Endothelial cell of umbilical vein (primary cell): ENCODE measurements at regions of chr16 and their contacts with region 1.

Region 1: GRCh38 chr16:87765776-87766484 is at the start of gene KLHDC4:
- DNase-seq: peak; percentile 86
- H3K4me3 ChIP-seq: peak within 1 kb of the TSS; percentile 55 to 82 (median 78)
- H3K27ac ChIP-seq: peak within 1 kb of the TSS; percentile 92
- H3K4me1 ChIP-seq: peaks cover 8% of the 10 kb centered on the region
- H3K27me3 ChIP-seq: no peaks in the 10 kb centered on the region
- CTCF ChIP-seq: no peak
- POLR2A ChIP-seq: peak; percentile 87
- total RNA-seq, gene KLHDC4: 46.2 and 46.7 TPM in 2 replicates

Region 2: DNA sequence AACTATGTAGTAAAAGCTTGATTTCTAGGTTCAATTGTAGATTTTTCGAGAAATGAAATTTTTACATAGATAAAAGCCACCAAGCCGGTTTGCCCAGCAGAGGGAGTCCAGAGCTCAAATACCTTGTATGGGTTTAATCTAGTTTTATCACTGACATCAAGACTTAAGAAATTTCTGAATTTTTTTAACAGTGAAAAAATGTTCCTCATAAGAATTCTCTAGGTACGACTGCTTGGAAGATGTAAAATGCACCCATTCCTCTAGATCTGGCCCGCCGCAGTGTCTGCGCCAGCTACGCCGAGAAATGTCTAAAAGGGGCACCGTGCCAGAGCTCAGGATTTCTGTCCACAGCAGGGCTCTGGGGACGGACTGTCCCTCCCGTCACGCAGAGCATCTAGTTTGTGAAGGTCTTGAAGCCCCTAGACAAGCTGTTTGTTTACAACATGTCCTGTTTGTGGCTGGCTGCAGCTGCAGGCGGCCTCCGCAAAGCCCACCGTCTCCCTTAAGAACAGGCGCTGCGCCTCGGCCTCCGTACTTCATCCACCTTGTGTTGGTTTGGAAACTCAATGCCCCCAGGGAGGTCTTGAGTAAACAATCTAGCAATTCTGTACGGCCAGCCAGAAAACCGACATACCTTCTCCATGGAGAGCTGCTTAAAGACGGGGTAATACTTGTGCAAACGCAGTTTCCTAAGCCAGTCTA is 349.0 kb before region 1 on chr16:
- CTCF ChIA-PET with region 1: interaction called, 14 read pairs
- POLR2A ChIA-PET with region 1: no interaction called
- dilution Hi-C with region 1: no loop called
- intact Hi-C with region 1: no loop called
- DNase-seq: peak; percentile 61
- H3K4me3 ChIP-seq: no peak overlapping the region
- H3K27ac ChIP-seq: no peak overlapping the region
- H3K4me1 ChIP-seq: no peaks in the 10 kb centered on the region
- H3K27me3 ChIP-seq: no peaks in the 10 kb centered on the region
- CTCF ChIP-seq: peak; percentile 58 to 59
- POLR2A ChIP-seq: no peak

Region 3: GRCh38 chr16:87581833-87582203 is 184.1 kb before region 1 on chr16:
- CTCF ChIA-PET with region 1: interaction called, 198 read pairs
- POLR2A ChIA-PET with region 1: interaction called, 3 read pairs
- dilution Hi-C with region 1: no loop called
- intact Hi-C with region 1: no loop called
- DNase-seq: peak; percentile 86
- H3K4me3 ChIP-seq: no peak overlapping the region
- H3K27ac ChIP-seq: peak overlapping the region; percentile 73
- H3K4me1 ChIP-seq: peaks cover 27% of the 10 kb centered on the region
- H3K27me3 ChIP-seq: no peaks in the 10 kb centered on the region
- CTCF ChIP-seq: no peak
- POLR2A ChIP-seq: no peak

Region 4: GRCh38 chr16:87636072-87636684 is 129.8 kb before region 1 on chr16:
- CTCF ChIA-PET with region 1: interaction called, 22 read pairs
- POLR2A ChIA-PET with region 1: no interaction called
- dilution Hi-C with region 1: no loop called
- intact Hi-C with region 1: loop called (anchors 5 kb)
- DNase-seq: peak; percentile 61
- H3K4me3 ChIP-seq: no peak overlapping the region
- H3K27ac ChIP-seq: no peak overlapping the region
- H3K4me1 ChIP-seq: no peaks in the 10 kb centered on the region
- H3K27me3 ChIP-seq: peaks cover 2% of the 10 kb centered on the region in 2 experiments
- CTCF ChIP-seq: peak; percentile 56 to 71
- POLR2A ChIP-seq: no peak

Region 5: GRCh38 chr16:87747626-87748414 is 18.1 kb before region 1 on chr16:
- CTCF ChIA-PET with region 1: interaction called, 10 read pairs
- POLR2A ChIA-PET with region 1: no interaction called
- dilution Hi-C with region 1: no loop called
- intact Hi-C with region 1: no loop called
- DNase-seq: no peak
- H3K4me3 ChIP-seq: no peak overlapping the region
- H3K27ac ChIP-seq: no peak overlapping the region
- H3K4me1 ChIP-seq: no peaks in the 10 kb centered on the region
- H3K27me3 ChIP-seq: no peaks in the 10 kb centered on the region
- CTCF ChIP-seq: no peak
- POLR2A ChIP-seq: no peak

Region 6: DNA sequence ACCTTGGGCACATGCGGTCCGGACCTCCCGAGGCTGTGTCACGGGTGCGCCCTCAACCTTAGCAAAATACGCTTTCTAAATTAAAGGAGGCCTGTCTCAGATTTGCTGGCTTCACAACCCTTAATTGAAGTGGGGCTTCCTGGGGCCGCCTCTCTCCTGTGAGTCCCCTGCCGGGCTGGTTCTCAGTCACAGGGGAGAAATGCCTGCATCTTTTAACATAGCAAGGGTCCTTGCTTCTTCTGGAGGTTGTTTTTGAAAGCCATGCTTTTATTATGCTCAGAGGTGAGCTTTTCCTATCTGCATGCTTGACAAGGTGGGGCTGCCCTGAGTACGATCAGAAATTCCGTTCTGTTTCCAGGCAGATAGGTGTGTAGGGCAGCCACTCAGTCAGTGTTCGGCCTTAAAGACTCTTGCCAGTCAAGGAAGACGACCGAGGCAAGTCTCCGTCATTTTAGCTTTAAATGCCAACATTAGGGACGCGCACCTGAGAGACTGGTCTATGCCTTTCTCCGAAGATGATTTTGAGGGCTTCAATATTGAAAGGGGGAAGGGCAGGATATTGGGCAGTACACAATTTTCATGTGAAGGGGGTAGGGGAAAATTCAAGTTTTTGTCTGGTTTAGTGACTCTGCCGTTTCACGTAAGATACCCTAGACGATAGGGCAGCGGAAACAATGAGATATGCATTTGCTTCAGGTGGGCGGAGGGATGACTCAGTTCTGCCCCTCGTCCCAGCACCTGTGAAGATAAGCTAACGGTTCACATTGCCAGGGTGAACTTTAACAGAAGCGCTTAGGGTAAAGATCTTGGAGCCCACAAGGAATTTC is 108.9 kb after region 1 on chr16:
- CTCF ChIA-PET with region 1: interaction called, 58 read pairs
- POLR2A ChIA-PET with region 1: interaction called, 6 read pairs
- dilution Hi-C with region 1: no loop called
- intact Hi-C with region 1: no loop called
- DNase-seq: no peak
- H3K4me3 ChIP-seq: no peak overlapping the region
- H3K27ac ChIP-seq: no peak overlapping the region
- H3K4me1 ChIP-seq: no peaks in the 10 kb centered on the region
- H3K27me3 ChIP-seq: peaks cover 3 to 4% of the 10 kb centered on the region in 2 experiments
- CTCF ChIP-seq: no peak
- POLR2A ChIP-seq: no peak